ENCODE measurements at regions of chr7 and their contacts with region 1.

Region 1: DNA sequence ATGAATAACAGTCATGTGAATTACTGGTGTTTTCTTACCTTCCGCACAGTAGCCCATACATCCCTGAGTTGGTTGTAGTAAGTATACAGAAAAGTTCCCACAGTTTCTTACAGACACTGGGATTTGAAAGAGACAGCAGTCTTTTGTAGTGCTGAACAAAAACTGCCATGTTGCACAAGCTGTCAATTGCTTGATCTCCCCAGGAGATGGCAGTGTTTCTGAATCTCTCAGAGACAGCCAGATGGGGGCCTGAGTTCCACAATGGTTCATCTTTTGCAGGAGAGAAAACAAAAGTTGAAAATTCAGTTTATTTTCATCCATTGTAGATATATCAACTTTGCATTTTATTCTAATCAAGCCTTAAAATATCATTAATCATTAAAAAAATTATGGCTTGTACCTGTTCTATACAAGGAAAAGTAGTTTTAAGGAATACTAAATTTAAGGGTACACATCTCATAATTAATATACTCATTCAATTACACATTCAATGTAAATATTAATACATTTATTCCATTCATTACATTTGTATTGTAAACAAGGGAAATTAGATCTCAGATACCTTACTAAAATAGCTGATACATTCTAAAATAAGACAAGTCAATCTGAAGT is 14.5 kb downstream of the VWDE start:
- DNase-seq: peak; percentile 41
- H3K4me3 ChIP-seq: no peak overlapping the region
- H3K27ac ChIP-seq: no peak overlapping the region
- H3K4me1 ChIP-seq: no peaks in the 10 kb centered on the region
- H3K27me3 ChIP-seq: no peaks in the 10 kb centered on the region
- CTCF ChIP-seq: peak; percentile 81 to 90

Region 2: DNA sequence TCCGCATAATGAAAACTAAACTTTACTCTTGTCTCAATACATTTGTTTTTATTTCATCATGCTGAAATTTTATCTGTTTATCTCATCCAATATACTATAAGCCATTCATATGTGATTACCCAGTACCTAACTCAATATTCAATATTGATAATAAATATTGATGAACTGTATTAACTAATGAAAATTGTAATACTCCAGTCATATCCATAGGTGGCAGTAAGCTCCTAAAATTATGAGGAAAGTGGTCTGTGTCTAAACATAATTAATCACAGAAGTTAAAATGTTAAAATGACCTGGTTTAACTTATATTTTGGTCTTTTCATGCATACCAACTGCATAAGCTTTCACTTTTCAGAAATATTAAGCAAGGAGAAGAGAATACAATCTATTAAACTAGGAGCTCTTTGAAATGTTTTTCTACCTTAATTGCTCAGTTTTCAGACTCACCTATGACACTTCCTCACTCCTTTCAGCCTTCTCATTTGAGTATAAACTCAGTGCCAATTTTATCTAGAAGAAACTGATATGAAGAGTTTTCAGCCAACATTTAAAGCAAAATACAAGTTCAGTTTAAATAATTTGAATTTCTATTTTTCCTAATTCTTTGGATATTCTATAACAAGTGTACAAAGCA is 44.9 kb after region 1 on chr7:
- CTCF ChIA-PET with region 1: no interaction called
- dilution Hi-C with region 1: no loop called
- in situ Hi-C with region 1: no loop called
- intact Hi-C with region 1: loop called (anchors 1 kb)
- DNase-seq: no peak
- H3K4me3 ChIP-seq: no peak overlapping the region
- H3K27ac ChIP-seq: no peak overlapping the region
- H3K4me1 ChIP-seq: peaks cover 3% of the 10 kb centered on the region
- H3K27me3 ChIP-seq: no peaks in the 10 kb centered on the region
- CTCF ChIP-seq: peak; percentile 54 to 57

Measured in mammary epithelial cell (primary cell).